ENCODE measurements at regions of chr1 and their contacts with region 1.

Region 1: GRCh38 chr1:70571191-70571590 is 160.1 kb downstream of the CTH start:
- DNase-seq: no peak
- ATAC-seq: no peak
- H3K4me3 ChIP-seq: no peak overlapping the region
- H3K27ac ChIP-seq: no peak overlapping the region
- H3K4me1 ChIP-seq: no peaks in the 10 kb centered on the region
- H3K27me3 ChIP-seq: no peaks in the 10 kb centered on the region
- CTCF ChIP-seq: no peak

Region 2: DNA sequence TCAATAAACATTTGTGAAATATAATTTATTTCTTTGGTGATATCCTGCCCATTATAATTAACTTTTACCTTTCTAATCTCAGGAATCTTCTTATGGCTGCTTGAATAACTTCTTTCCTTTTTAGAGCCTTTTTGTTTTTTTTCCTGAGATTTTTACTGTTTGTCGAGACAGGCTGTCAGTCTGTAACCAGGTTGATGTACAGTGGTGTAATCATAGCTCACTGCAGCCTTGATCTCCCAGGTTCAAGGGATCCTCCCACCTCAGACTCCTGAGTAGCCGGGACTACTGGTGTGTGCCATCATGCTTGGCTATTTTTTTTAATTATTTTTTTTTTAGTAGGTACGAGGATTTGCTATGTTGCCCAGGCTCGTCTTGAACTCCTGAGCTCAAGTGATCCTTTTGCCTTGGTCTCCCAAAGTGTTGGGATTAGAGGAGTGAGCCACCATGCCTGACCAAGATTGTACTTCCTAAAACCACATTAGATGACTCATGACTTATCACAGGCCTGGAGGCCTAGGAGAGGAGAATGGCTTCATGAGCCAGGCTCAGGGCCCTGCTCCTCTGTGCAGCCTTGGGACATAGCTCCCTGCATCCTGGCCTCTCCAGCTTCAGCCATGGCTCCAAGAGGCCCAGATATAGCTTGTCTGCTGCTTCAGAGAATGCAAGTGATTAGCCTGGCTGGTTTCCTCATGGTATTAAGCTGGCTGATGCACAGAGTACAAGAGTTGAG is 111.5 kb before region 1 on chr1:
- intact Hi-C with region 1: no loop called
- DNase-seq: no peak
- ATAC-seq: peak in 1 of 4 donors; percentile 27
- H3K4me3 ChIP-seq: no peak overlapping the region
- H3K27ac ChIP-seq: no peak overlapping the region
- H3K4me1 ChIP-seq: no peaks in the 10 kb centered on the region
- H3K27me3 ChIP-seq: no peaks in the 10 kb centered on the region
- CTCF ChIP-seq: no peak

Region 3: DNA sequence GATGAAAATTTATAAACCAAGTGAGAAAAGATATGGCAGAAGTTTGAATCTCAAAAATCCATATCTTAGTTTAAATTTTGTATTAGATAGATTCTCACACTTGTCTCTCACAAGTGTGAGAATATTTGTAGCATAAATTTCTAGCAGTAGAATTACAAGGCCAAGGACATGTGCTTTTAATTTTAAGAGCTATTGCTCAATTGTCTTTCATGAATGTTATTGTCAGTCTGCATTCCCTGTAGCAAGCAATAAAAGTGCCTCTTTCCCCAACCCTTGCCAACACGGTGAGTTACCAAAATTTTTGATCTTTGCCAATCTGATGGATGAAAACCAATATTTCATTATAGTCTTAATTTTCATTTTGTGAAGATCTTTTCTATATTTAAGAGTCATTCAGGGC is 96.2 kb before region 1 on chr1:
- intact Hi-C with region 1: no loop called
- DNase-seq: no peak
- ATAC-seq: no peak
- H3K4me3 ChIP-seq: no peak overlapping the region
- H3K27ac ChIP-seq: no peak overlapping the region
- H3K4me1 ChIP-seq: no peaks in the 10 kb centered on the region
- H3K27me3 ChIP-seq: no peaks in the 10 kb centered on the region
- CTCF ChIP-seq: no peak

Region 4: GRCh38 chr1:70504176-70504820 is 66.9 kb before region 1 on chr1:
- intact Hi-C with region 1: no loop called
- DNase-seq: no peak
- ATAC-seq: peak in 1 of 4 donors; percentile 57
- H3K4me3 ChIP-seq: no peak overlapping the region
- H3K27ac ChIP-seq: no peak overlapping the region
- H3K4me1 ChIP-seq: no peaks in the 10 kb centered on the region
- H3K27me3 ChIP-seq: no peaks in the 10 kb centered on the region
- CTCF ChIP-seq: no peak

Region 5: DNA sequence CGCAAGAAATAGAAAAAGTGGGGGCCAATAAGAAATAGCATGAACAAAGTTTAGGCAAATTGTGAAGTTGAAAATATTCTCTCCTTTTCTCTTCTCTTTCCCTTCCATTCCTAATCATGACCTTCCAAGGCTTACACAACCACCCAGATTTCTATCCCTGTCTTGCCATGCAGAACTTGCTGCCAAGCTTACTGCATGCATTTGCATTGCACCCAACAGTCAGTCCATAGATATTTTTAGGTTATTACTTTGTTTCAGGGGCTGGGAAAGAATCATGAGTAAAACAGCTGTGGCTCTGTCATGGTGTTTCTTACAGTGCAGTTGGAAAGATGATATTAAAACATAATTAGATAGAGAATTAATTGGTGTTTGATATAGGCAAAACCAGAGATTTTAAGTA is 257.0 kb after region 1 on chr1:
- intact Hi-C with region 1: no loop called
- DNase-seq: no peak
- ATAC-seq: no peak
- H3K4me3 ChIP-seq: no peak overlapping the region
- H3K27ac ChIP-seq: no peak overlapping the region
- H3K4me1 ChIP-seq: no peaks in the 10 kb centered on the region
- H3K27me3 ChIP-seq: no peaks in the 10 kb centered on the region
- CTCF ChIP-seq: no peak

Region 6: DNA sequence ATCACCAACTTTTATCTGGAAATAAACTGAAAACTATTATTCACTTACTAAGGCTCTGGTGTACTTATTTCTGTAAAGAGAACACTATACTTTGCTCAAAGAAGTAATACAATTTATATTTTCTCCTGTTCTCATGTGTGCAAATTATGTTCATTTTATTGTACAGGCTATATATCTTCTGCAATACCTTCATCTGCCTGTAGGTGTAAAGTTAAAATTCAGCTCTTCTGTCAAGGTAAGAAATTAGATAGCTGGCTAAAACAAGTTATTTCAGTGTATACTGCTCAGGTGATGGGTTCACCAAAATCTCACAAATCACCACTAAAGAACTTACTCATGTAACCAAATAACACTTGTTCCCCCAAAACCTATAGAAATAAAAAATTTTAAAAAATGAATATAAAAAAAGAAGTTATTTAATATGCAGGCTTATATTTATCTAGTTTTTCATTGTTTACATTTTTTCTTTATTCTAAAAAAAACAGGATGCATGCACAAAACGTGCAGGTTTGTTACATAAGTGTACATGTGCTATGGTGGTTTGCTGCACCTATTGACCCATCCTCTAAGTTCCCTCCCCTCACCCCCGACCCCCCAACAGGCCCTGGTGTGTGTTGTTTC is 394.9 kb after region 1 on chr1:
- intact Hi-C with region 1: loop called in 1 of 3 experiments (anchors 10 kb)
- DNase-seq: no peak
- ATAC-seq: no peak
- H3K4me3 ChIP-seq: no peak overlapping the region
- H3K27ac ChIP-seq: no peak overlapping the region
- H3K4me1 ChIP-seq: no peaks in the 10 kb centered on the region
- H3K27me3 ChIP-seq: no peaks in the 10 kb centered on the region
- CTCF ChIP-seq: peak in 3 of 4 donors; percentile 25 to 44 (median 31)